Activated CD4-positive, alpha-beta memory T cell treated with anti-CD3 and anti-CD28 coated beads for 36 hours (primary cell): ENCODE measurements at regions of chr19 and their contacts with region 1.

Region 1: GRCh38 chr19:45439569-45440254 is 16.0 kb upstream of the ERCC1 start:
- DNase-seq: peak; percentile 87
- H3K4me3 Mint-ChIP-seq: peak overlapping the region; percentile 51
- H3K27ac Mint-ChIP-seq: peak overlapping the region; percentile 55
- H3K4me1 Mint-ChIP-seq: peaks cover 25% of the 10 kb centered on the region
- H3K27me3 Mint-ChIP-seq: no peaks in the 10 kb centered on the region

Region 2: DNA sequence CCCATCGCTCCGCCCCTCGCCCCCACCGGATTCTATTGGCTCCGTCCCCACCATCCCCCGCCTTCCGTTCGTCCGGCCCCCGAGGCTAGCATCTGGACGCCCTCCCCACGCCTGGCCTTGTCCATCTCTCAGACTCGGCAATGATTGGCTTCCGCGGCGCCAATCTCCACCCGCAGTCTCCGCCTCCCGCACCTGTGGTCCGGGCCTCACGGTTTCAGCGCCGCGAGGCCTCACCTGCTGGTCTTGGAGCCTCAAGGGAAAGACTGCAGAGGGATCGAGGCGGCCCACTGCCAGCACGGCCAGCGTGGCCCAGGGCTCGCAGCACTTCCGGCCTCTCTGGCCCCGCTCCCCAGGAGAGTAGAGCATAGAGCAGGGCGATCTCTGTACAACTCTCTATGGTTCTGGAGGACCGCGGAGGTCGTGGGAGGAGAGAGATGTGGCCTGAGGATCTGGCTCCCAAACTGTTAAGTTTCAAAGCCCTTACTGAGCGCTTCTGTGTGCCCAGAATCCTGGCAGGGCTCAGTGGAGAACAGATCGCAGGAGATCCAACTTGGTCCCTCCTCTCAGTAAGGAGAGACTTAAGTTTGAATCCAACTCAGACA is 16.0 kb before region 1 on chr19 and contains the start of gene ERCC1:
- CTCF ChIA-PET with region 1: interaction called, 15 read pairs
- POLR2A ChIA-PET with region 1: no interaction called
- intact Hi-C with region 1: loop called (anchors 2 kb)
- DNase-seq: peak; percentile 92
- H3K4me3 Mint-ChIP-seq: peak within 1 kb of the TSS; percentile 85
- H3K27ac Mint-ChIP-seq: peak within 1 kb of the TSS; percentile 88
- H3K4me1 Mint-ChIP-seq: peaks cover 54% of the 10 kb centered on the region
- H3K27me3 Mint-ChIP-seq: peaks cover 2% of the 10 kb centered on the region
- total RNA-seq, gene ERCC1: 59.4 to 59.7 TPM

Region 3: GRCh38 chr19:45469132-45469944 is 29.6 kb after region 1 on chr19:
- CTCF ChIA-PET with region 1: interaction called, 420 read pairs
- POLR2A ChIA-PET with region 1: interaction called, 21 read pairs
- intact Hi-C with region 1: loop called (anchors 1 kb)
- DNase-seq: peak; percentile 96
- H3K4me3 Mint-ChIP-seq: peak overlapping the region; percentile 87
- H3K27ac Mint-ChIP-seq: peak overlapping the region; percentile 84
- H3K4me1 Mint-ChIP-seq: peaks cover 33% of the 10 kb centered on the region
- H3K27me3 Mint-ChIP-seq: peaks cover 1% of the 10 kb centered on the region

Region 4: DNA sequence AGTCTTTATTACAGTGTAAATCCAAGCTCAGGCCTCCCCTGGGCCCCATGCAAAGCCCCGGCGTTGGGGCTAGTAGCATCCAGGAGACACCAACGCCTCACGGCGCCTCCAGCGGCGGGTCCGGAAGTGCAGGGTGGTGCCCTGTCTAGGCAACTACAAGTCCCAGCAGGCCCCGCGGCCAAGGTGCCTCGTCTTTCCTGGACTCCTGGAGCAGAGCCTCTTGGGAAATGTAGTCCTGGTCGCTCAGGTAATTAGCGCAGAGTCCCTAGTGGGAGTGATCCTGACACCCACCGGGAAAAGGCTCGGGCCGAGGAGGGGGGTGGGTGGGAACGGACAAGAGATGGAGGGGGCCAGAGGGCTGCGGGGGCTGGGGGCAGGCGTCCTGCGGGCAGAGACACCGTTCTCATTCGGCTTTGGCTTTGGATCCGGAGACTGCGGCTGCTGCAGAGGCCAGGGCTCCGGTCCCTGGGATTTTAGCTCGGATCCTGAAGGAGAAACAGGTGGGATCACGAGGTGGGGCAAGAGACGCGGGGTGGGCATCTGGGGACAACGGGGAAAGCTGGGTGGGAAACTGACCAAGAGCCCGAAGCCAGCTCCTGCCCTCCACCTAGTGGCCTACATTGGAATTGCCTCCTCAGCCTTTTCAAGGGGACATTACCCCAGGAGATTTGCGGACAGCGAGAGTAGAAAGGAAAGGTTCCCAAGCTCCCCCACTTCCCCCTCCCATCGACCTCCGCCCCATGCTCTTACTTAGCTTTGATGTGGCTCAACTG is 45.8 kb after region 1 on chr19:
- CTCF ChIA-PET with region 1: interaction called, 420 read pairs
- POLR2A ChIA-PET with region 1: interaction called, 5 read pairs
- intact Hi-C with region 1: no loop called
- DNase-seq: peak; percentile 99
- H3K4me3 Mint-ChIP-seq: peak overlapping the region; percentile 86
- H3K27ac Mint-ChIP-seq: peak overlapping the region; percentile 60
- H3K4me1 Mint-ChIP-seq: peaks cover 9% of the 10 kb centered on the region
- H3K27me3 Mint-ChIP-seq: no peaks in the 10 kb centered on the region

Region 5: GRCh38 chr19:45681391-45682015 is 241.8 kb after region 1 on chr19:
- CTCF ChIA-PET with region 1: interaction called, 15 read pairs
- POLR2A ChIA-PET with region 1: no interaction called
- intact Hi-C with region 1: no loop called
- DNase-seq: peak; percentile 93
- H3K4me3 Mint-ChIP-seq: peak overlapping the region; percentile 73
- H3K27ac Mint-ChIP-seq: no peak overlapping the region
- H3K4me1 Mint-ChIP-seq: peaks cover 19% of the 10 kb centered on the region
- H3K27me3 Mint-ChIP-seq: no peaks in the 10 kb centered on the region